ENCODE measurements at regions of chr3 and their contacts with region 1.

Region 1: DNA sequence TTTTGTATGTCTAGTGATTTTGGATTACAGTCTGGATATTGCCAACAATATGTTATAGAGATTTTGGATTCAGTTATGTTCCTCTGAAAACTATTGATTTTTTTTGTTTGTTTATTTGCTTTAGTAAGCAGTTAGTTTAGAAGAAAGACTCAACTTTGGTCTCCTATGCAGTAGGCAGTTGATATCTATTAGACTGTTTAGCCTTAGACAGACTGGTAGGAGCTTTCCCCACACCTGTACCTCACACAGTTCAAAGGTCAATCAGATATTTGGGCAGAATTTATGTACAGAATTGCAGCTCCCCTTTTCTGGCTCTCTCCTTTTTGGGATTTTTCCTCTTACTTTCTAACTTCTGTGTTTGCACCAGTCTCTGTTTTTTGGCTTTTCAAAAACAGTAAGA is 42.3 kb downstream of the IL20RB start:
- DNase-seq: no peak
- ATAC-seq: no peak
- H3K4me3 ChIP-seq: no peak overlapping the region
- H3K4me3 Mint-ChIP-seq: no peak overlapping the region
- H3K27ac ChIP-seq: no peak overlapping the region
- H3K27ac Mint-ChIP-seq: no peak overlapping the region
- H3K4me1 ChIP-seq: no peaks in the 10 kb centered on the region
- H3K4me1 Mint-ChIP-seq: peaks cover 1% of the 10 kb centered on the region
- H3K27me3 ChIP-seq: no peaks in the 10 kb centered on the region
- H3K27me3 Mint-ChIP-seq: no peaks in the 10 kb centered on the region
- CTCF ChIP-seq: no peak

Region 2: DNA sequence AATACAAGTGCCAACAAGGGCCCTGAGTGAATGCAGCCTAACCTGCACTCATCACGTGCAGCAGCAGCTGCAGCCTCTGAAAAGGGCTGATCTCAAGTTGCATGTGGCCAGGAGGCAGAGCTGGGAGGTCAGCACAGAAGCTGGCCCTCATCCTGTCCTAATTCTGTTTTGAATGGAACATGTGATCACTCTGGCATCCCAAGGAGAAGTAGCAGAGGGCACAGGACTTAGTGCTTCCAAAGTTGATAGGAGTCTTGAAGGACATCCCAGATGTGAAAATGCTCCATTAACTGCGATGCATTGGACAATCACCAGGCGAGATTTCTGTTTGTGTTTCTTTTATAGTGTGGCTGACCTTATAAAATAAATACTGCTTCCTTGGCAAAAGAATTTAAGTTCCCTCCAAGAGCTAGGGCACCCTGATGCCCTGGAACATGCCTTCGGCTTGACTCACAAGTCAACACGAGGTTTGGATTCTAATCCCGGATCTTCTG is 216.3 kb before region 1 on chr3:
- CTCF ChIA-PET with region 1: no interaction called
- POLR2A ChIA-PET with region 1: no interaction called
- intact Hi-C with region 1: loop called in 1 of 2 experiments (anchors 1 kb)
- DNase-seq: no peak
- ATAC-seq: no peak
- H3K4me3 ChIP-seq: no peak overlapping the region
- H3K4me3 Mint-ChIP-seq: no peak overlapping the region
- H3K27ac ChIP-seq: no peak overlapping the region
- H3K27ac Mint-ChIP-seq: no peak overlapping the region
- H3K4me1 ChIP-seq: no peaks in the 10 kb centered on the region
- H3K4me1 Mint-ChIP-seq: peaks cover 12% of the 10 kb centered on the region
- H3K27me3 ChIP-seq: no peaks in the 10 kb centered on the region
- H3K27me3 Mint-ChIP-seq: no peaks in the 10 kb centered on the region
- CTCF ChIP-seq: no peak

Measured in CD8-positive, alpha-beta T cell (primary cell).